ENCODE measurements at regions of chr7 and their contacts with region 1.

Region 1: GRCh38 chr7:137772748-137773147 is 74.0 kb downstream of the DGKI start:
- DNase-seq: no peak
- ATAC-seq: no peak
- H3K4me3 ChIP-seq: no peak overlapping the region
- H3K27ac ChIP-seq: no peak overlapping the region
- H3K4me1 ChIP-seq: no peaks in the 10 kb centered on the region
- H3K27me3 ChIP-seq: no peaks in the 10 kb centered on the region
- CTCF ChIP-seq: no peak

Region 2: DNA sequence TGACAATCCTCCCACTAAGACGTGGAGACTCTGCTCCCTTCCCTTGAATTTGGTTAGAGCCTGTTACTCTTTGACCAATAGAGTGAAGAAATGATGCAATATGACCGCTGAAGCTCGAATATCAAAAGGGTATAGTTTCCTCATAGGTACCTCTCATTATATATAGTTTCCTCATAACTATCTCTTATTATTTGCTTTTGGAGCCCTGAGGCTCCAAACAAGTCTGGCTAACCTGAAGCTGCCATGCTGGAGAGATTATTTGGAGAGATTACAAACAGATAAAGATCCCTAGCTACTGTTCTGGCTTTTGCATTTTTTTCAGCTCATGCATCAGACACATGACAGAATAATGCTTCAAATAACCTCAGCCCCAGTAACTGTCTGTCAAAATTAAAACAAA is 969.8 kb before region 1 on chr7:
- intact Hi-C with region 1: loop called in 1 of 2 experiments (anchors 10 kb)
- DNase-seq: no peak
- ATAC-seq: no peak
- H3K4me3 ChIP-seq: no peak overlapping the region
- H3K27ac ChIP-seq: no peak overlapping the region
- H3K4me1 ChIP-seq: no peaks in the 10 kb centered on the region
- H3K27me3 ChIP-seq: no peaks in the 10 kb centered on the region
- CTCF ChIP-seq: no peak

Region 3: GRCh38 chr7:138021889-138022288 is 249.1 kb after region 1 on chr7:
- intact Hi-C with region 1: no loop called
- DNase-seq: no peak
- ATAC-seq: no peak
- H3K4me3 ChIP-seq: no peak overlapping the region
- H3K27ac ChIP-seq: no peak overlapping the region
- H3K4me1 ChIP-seq: no peaks in the 10 kb centered on the region
- H3K27me3 ChIP-seq: peaks cover 0 to 3% (median 0%) of the 10 kb centered on the region in 3 donors
- CTCF ChIP-seq: no peak

Measured in psoas muscle (tissue), 8 donors.